Ascending aorta (tissue), 2 donors: ENCODE measurements at regions of chr9 and their contacts with region 1.

Region 1: DNA sequence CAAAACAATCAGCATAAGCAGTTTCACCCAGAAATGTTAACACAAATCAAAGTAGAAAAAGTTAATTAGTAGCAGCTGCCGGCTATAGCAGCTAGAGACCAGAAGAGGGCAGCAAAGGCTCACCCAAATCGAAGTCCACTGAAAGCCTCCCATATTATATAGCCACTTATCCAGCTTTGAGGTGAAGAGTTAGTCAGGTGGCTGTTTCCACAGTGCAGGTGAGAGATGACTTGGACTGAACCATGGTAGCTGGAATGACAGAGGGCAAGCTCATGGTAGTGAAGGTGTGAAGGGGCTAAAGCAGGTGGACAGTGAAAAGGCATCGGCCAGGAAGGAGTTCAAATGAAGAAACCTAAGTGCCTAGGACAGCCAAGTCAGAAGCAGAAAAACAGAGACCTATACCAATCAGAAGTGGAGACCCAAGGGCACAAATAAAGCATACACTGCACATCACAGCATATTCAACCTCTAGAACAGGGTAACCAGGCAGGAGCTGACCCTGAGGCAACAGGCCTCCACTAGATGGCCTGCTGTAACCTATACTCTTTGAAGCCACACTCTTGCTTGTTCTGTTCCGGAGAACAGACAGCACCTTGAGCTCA is 7.2 kb upstream of the RNF38 start:
- DNase-seq: peak in 1 of 2 donors; percentile 79
- H3K4me3 ChIP-seq: no peak overlapping the region
- H3K27ac ChIP-seq: peak overlapping the region; percentile 4 to 42
- H3K4me1 ChIP-seq: peaks cover 0 to 3% of the 10 kb centered on the region in 2 donors
- H3K27me3 ChIP-seq: no peaks in the 10 kb centered on the region
- CTCF ChIP-seq: peak; percentile 87 to 92 (median 91)

Region 2: GRCh38 chr9:36551129-36551528 is 143.9 kb after region 1 on chr9:
- intact Hi-C with region 1: loop called (anchors 1 kb)
- DNase-seq: no peak
- H3K4me3 ChIP-seq: no peak overlapping the region
- H3K27ac ChIP-seq: no peak overlapping the region
- H3K4me1 ChIP-seq: no peaks in the 10 kb centered on the region
- H3K27me3 ChIP-seq: no peaks in the 10 kb centered on the region
- CTCF ChIP-seq: no peak